ENCODE measurements at regions of chrX and their contacts with region 1.

Region 1: GRCh38 chrX:19121898-19122640 is at the start of gene ADGRG2:
- DNase-seq: peak; percentile 86
- H3K4me3 ChIP-seq: peak within 1 kb of the TSS; percentile 75
- H3K27ac ChIP-seq: peak within 1 kb of the TSS; percentile 96
- H3K4me1 ChIP-seq: peaks cover 38% of the 10 kb centered on the region
- H3K27me3 ChIP-seq: no peaks in the 10 kb centered on the region
- CTCF ChIP-seq: peak; percentile 42
- total RNA-seq, gene ADGRG2: 61.3 and 73.6 TPM in 2 replicates

Region 2: DNA sequence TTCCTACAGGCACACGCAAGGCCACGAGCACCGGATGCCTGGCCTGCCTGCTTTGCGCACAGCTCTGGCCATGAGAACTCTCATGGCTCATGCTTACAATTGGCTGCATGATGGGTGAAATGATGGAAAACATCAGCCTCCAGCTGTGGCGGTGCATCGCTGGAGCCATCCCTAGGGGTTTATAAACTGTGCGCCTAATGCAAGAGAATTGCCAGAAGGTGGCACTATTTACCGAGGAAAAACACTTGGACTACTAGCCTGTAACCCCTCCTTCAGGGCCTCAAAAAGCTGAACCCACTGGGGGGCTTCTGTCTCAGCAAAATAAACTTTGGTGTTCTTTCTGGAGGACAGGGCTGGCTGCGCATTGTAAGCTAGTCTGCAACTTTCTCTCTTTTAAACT is 190.1 kb before region 1 on chrX:
- CTCF ChIA-PET with region 1: no interaction called
- POLR2A ChIA-PET with region 1: no interaction called
- intact Hi-C with region 1: loop called (anchors 5 kb)
- DNase-seq: peak; percentile 90
- H3K4me3 ChIP-seq: no peak overlapping the region
- H3K27ac ChIP-seq: no peak overlapping the region
- H3K4me1 ChIP-seq: peaks cover 15% of the 10 kb centered on the region
- H3K27me3 ChIP-seq: no peaks in the 10 kb centered on the region
- CTCF ChIP-seq: peak; percentile 81

Region 3: DNA sequence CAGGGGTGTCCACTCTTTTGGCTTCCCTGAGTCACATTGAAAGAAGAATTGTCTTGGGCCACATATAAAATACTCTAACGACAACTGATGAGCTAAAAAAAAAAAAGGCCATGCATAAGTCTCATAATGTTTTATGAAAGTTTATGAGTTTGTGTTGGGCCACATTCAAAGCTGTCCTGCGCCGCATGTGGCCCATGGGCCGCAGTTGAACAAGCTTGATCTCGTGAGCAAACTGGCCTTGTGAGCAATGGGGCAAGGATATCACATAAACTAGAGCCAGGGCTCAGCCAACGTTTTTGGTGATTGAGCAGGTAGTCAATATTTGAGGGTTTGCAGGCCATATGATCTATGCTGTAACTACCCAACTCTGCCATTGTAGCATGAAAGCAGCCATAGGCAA is 93.5 kb before region 1 on chrX:
- CTCF ChIA-PET with region 1: no interaction called
- POLR2A ChIA-PET with region 1: no interaction called
- intact Hi-C with region 1: loop called (anchors 5 kb)
- DNase-seq: no peak
- H3K4me3 ChIP-seq: no peak overlapping the region
- H3K27ac ChIP-seq: no peak overlapping the region
- H3K4me1 ChIP-seq: no peaks in the 10 kb centered on the region
- H3K27me3 ChIP-seq: no peaks in the 10 kb centered on the region
- CTCF ChIP-seq: no peak

Measured in A673 (cell line).